ENCODE measurements at regions of chr12 and their contacts with region 1.

Region 1: GRCh38 chr12:108691175-108691997 is 39.9 kb downstream of the CORO1C start:
- DNase-seq: peak; percentile 63
- ATAC-seq: peak; percentile 90
- H3K4me3 ChIP-seq: peak overlapping the region; percentile 62; the same call in 1 of the 2 replicates
- H3K27ac ChIP-seq: peak overlapping the region; percentile 97
- H3K4me1 ChIP-seq: peaks cover 66% of the 10 kb centered on the region
- H3K27me3 ChIP-seq: no peaks in the 10 kb centered on the region
- CTCF ChIP-seq: peak in 2 of 3 experiments; percentile 24 to 37; a peak in 2 of 6 replicates
- EP300 ChIP-seq: 0 out of 4 replicates have a peak, but pooled peaks of 1 of the 2 experiments have one; percentile 29
- POLR2A ChIP-seq: peak; percentile 27; the same call in 1 of the 2 replicates
- RAD21 ChIP-seq: no peak

Region 2: GRCh38 chr12:108542320-108542719 is 149.1 kb before region 1 on chr12:
- CTCF ChIA-PET with region 1: no interaction called
- POLR2A ChIA-PET with region 1: no interaction called
- RAD21 ChIA-PET with region 1: no interaction called
- SMC1A ChIA-PET with region 1: no interaction called
- in situ Hi-C with region 1: no loop called
- intact Hi-C with region 1: no loop called
- DNase-seq: no peak
- ATAC-seq: no peak
- H3K4me3 ChIP-seq: no peak overlapping the region
- H3K27ac ChIP-seq: peak overlapping the region; percentile 88; the same call in 1 of the 2 replicates
- H3K4me1 ChIP-seq: peaks cover 23% of the 10 kb centered on the region
- H3K27me3 ChIP-seq: no peaks in the 10 kb centered on the region
- CTCF ChIP-seq: no peak
- EP300 ChIP-seq: no peak
- POLR2A ChIP-seq: no peak
- RAD21 ChIP-seq: no peak

Region 3: GRCh38 chr12:108640802-108641445 is 50.5 kb before region 1 on chr12:
- CTCF ChIA-PET with region 1: interaction called, 6 read pairs
- POLR2A ChIA-PET with region 1: interaction called, 6 read pairs
- RAD21 ChIA-PET with region 1: interaction called, 17 read pairs
- SMC1A ChIA-PET with region 1: interaction called, 15 read pairs
- in situ Hi-C with region 1: no loop called
- intact Hi-C with region 1: no loop called
- DNase-seq: no peak
- ATAC-seq: peak; percentile 4
- H3K4me3 ChIP-seq: peak overlapping the region; percentile 22; the same call in 1 of the 2 replicates
- H3K27ac ChIP-seq: peak overlapping the region; percentile 45
- H3K4me1 ChIP-seq: peaks cover 59% of the 10 kb centered on the region
- H3K27me3 ChIP-seq: no peaks in the 10 kb centered on the region
- CTCF ChIP-seq: no peak
- EP300 ChIP-seq: no peak
- POLR2A ChIP-seq: no peak
- RAD21 ChIP-seq: no peak

Region 4: GRCh38 chr12:108701779-108702441 is 10.5 kb after region 1 on chr12:
- CTCF ChIA-PET with region 1: interaction called, 15 read pairs
- POLR2A ChIA-PET with region 1: interaction called, 5 read pairs
- RAD21 ChIA-PET with region 1: interaction called, 10 read pairs
- SMC1A ChIA-PET with region 1: interaction called, 29 read pairs
- in situ Hi-C with region 1: no loop called
- intact Hi-C with region 1: no loop called
- DNase-seq: no peak
- ATAC-seq: peak; percentile 70
- H3K4me3 ChIP-seq: no peak overlapping the region
- H3K27ac ChIP-seq: peak overlapping the region; percentile 11; the same call in 1 of the 2 replicates
- H3K4me1 ChIP-seq: peaks cover 20% of the 10 kb centered on the region
- H3K27me3 ChIP-seq: no peaks in the 10 kb centered on the region
- CTCF ChIP-seq: no peak
- EP300 ChIP-seq: no peak
- POLR2A ChIP-seq: no peak
- RAD21 ChIP-seq: no peak

Region 5: GRCh38 chr12:108722992-108723766 is 31.8 kb after region 1 on chr12:
- CTCF ChIA-PET with region 1: interaction called, 7 read pairs
- POLR2A ChIA-PET with region 1: interaction called, 7 read pairs
- RAD21 ChIA-PET with region 1: interaction called, 12 read pairs
- SMC1A ChIA-PET with region 1: interaction called, 83 read pairs
- in situ Hi-C with region 1: no loop called
- intact Hi-C with region 1: no loop called
- DNase-seq: no peak
- ATAC-seq: peak; percentile 52
- H3K4me3 ChIP-seq: no peak overlapping the region
- H3K27ac ChIP-seq: no peak overlapping the region
- H3K4me1 ChIP-seq: peaks cover 11% of the 10 kb centered on the region
- H3K27me3 ChIP-seq: no peaks in the 10 kb centered on the region
- CTCF ChIP-seq: no peak
- EP300 ChIP-seq: no peak
- POLR2A ChIP-seq: no peak
- RAD21 ChIP-seq: no peak

Measured in GM12878 (cell line).